ENCODE measurements at regions of chr11 and their contacts with region 1.

Region 1: DNA sequence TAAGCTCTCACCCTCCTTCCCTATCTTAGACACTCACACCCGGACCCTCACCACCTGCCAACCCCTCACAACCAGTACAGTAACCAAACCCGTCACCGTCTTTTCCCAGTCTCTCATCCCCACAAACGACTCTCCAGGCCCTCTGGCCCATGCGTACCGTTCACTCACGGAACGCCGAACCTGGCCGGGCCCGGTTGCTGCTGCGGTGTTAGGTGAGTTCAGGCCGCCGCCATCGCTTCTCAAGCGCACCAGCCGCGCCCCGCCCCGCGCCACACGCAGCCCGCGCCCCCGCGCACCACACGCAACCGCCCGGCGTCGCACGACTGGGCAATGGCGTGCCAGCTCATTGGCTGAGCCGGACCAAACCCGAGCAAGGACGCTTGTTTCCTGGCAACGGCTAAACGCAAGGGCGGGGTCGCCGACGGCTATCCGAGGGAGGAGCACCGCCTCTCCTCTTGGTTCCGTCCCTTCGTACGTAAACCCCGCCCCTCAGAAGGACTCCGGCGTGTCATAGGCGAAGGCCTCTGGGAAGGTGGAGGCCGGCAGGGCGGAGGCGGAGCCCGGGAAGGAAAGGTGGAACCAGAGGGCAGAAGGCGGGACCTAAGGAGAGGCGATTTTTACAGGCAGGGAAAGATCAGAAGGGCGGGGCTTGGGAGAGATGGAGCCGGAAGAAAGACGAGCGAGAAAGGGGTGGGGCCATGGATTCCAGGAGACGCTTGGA is at the start of gene FHIP1B:
- DNase-seq: peak; percentile 99 to 100 (median 100)
- H3K4me3 ChIP-seq: peak within 1 kb of the TSS; percentile 80 to 86
- H3K4me3 Mint-ChIP-seq: peak within 1 kb of the TSS; percentile 96 to 100 (median 98)
- H3K27ac ChIP-seq: peak within 1 kb of the TSS; percentile 75
- H3K27ac Mint-ChIP-seq: peak within 1 kb of the TSS; percentile 87 to 100 (median 99)
- H3K4me1 ChIP-seq: peaks cover 32% of the 10 kb centered on the region
- H3K4me1 Mint-ChIP-seq: peaks cover 27 to 51% (median 42%) of the 10 kb centered on the region in 4 donors
- H3K27me3 ChIP-seq: no peaks in the 10 kb centered on the region
- H3K27me3 Mint-ChIP-seq: peaks cover 0 to 2% of the 10 kb centered on the region in 2 donors
- total RNA-seq, gene FHIP1B: 48.7 to 50.8 TPM

Region 2: GRCh38 chr11:5684646-5685362 is 549.7 kb before region 1 on chr11 and contains the start of gene TRIM5:
- CTCF ChIA-PET with region 1: no interaction called
- POLR2A ChIA-PET with region 1: no interaction called
- intact Hi-C with region 1: loop called (anchors 10 kb)
- DNase-seq: peak; percentile 79 to 90 (median 81)
- H3K4me3 ChIP-seq: peak within 1 kb of the TSS; percentile 65 to 100
- H3K4me3 Mint-ChIP-seq: peak within 1 kb of the TSS; percentile 91 to 97 (median 95)
- H3K27ac ChIP-seq: peak within 1 kb of the TSS; percentile 83
- H3K27ac Mint-ChIP-seq: peak within 1 kb of the TSS; percentile 94 to 98 (median 97)
- H3K4me1 ChIP-seq: peaks cover 33% of the 10 kb centered on the region
- H3K4me1 Mint-ChIP-seq: peaks cover 40 to 69% (median 54%) of the 10 kb centered on the region in 4 donors
- H3K27me3 ChIP-seq: no peaks in the 10 kb centered on the region
- H3K27me3 Mint-ChIP-seq: no peaks in the 10 kb centered on the region
- total RNA-seq, gene TRIM5: 33.9 to 35.5 TPM

Region 3: GRCh38 chr11:6258571-6259081 is 24.1 kb after region 1 on chr11:
- CTCF ChIA-PET with region 1: no interaction called
- POLR2A ChIA-PET with region 1: interaction called, 8 read pairs
- intact Hi-C with region 1: loop called (anchors 2 kb)
- DNase-seq: no peak
- H3K4me3 ChIP-seq: peak overlapping the region in 1 of 2 donors; percentile 23
- H3K4me3 Mint-ChIP-seq: peak overlapping the region; percentile 73 to 86 (median 83)
- H3K27ac ChIP-seq: no peak overlapping the region
- H3K27ac Mint-ChIP-seq: no peak overlapping the region
- H3K4me1 ChIP-seq: peaks cover 11% of the 10 kb centered on the region
- H3K4me1 Mint-ChIP-seq: peaks cover 0 to 11% (median 5%) of the 10 kb centered on the region in 4 donors
- H3K27me3 ChIP-seq: peaks cover 21% of the 10 kb centered on the region
- H3K27me3 Mint-ChIP-seq: peaks cover 8 to 11% of the 10 kb centered on the region in 2 donors

Region 4: GRCh38 chr11:6481012-6481923 is 246.7 kb after region 1 on chr11 and contains the starts of genes ARFIP2 and TIMM10B:
- CTCF ChIA-PET with region 1: no interaction called
- POLR2A ChIA-PET with region 1: interaction called, 14 read pairs
- intact Hi-C with region 1: loop called (anchors 1 kb)
- DNase-seq: peak; percentile 93 to 98 (median 95)
- H3K4me3 ChIP-seq: peak within 1 kb of the TSS; percentile 83 to 97
- H3K4me3 Mint-ChIP-seq: peak within 1 kb of the TSS; percentile 93 to 98 (median 96)
- H3K27ac ChIP-seq: peak within 1 kb of the TSS; percentile 90
- H3K27ac Mint-ChIP-seq: peak within 1 kb of the TSS; percentile 95 to 99 (median 98)
- H3K4me1 ChIP-seq: peaks cover 46% of the 10 kb centered on the region
- H3K4me1 Mint-ChIP-seq: peaks cover 26 to 44% (median 36%) of the 10 kb centered on the region in 4 donors
- H3K27me3 ChIP-seq: no peaks in the 10 kb centered on the region
- H3K27me3 Mint-ChIP-seq: no peaks in the 10 kb centered on the region
- total RNA-seq, gene ARFIP2: 53.9 to 56.9 TPM
- total RNA-seq, gene TIMM10B: 54.7 to 60.3 TPM

Region 5: GRCh38 chr11:6737872-6738466 is 503.4 kb after region 1 on chr11:
- CTCF ChIA-PET with region 1: no interaction called
- POLR2A ChIA-PET with region 1: no interaction called
- intact Hi-C with region 1: loop called (anchors 10 kb)
- DNase-seq: peak; percentile 73 to 82 (median 75)
- H3K4me3 ChIP-seq: no peak overlapping the region
- H3K4me3 Mint-ChIP-seq: peak overlapping the region; percentile 23 to 77 (median 38)
- H3K27ac ChIP-seq: peak overlapping the region; percentile 38
- H3K27ac Mint-ChIP-seq: peak overlapping the region; percentile 60 to 89 (median 75)
- H3K4me1 ChIP-seq: peaks cover 88% of the 10 kb centered on the region
- H3K4me1 Mint-ChIP-seq: peaks cover 75 to 91% (median 83%) of the 10 kb centered on the region in 4 donors
- H3K27me3 ChIP-seq: no peaks in the 10 kb centered on the region
- H3K27me3 Mint-ChIP-seq: no peaks in the 10 kb centered on the region

Region 6: DNA sequence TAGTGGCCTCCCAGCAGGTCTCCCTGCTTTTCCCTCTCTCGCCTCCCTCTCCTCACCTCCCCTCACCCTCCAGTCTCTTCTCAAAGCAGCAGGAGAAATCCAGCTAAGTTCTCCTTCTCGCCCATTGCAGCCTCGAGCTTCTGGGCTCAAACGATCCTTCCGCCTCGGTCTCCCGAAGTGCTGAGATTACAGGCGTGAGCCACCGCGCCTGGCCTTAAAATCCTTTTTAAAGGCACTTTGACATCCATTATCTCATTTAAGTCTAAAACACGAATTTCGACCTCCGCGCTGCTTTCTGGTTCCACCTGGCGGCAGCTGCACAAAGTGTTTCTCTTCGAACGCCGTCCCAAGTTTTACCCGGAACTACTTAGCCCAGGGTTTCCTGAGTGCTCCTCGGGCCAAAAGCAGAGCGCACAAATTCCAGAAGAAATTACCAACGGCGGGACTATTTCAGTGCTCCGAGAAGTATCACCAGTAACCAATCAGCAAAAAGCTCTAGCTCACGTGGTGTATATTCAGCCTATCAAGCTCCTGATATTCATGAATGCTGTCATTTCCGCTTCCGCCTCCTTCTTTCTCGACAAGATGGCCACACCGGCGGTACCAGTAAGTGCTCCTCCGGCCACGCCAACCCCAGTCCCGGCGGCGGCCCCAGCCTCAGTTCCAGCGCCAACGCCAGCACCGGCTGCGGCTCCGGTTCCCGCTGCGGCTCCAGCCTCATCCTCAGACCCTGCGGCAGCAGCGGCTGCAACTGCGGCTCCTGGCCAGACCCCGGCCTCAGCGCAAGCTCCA is 1752.4 kb after region 1 on chr11 and contains the start of gene EIF3F:
- CTCF ChIA-PET with region 1: no interaction called
- POLR2A ChIA-PET with region 1: no interaction called
- intact Hi-C with region 1: loop called (anchors 10 kb)
- DNase-seq: peak; percentile 93 to 98 (median 96)
- H3K4me3 ChIP-seq: peak within 1 kb of the TSS; percentile 63 to 77
- H3K4me3 Mint-ChIP-seq: peak within 1 kb of the TSS; percentile 89 to 97 (median 95)
- H3K27ac ChIP-seq: peak within 1 kb of the TSS; percentile 77
- H3K27ac Mint-ChIP-seq: peak within 1 kb of the TSS; percentile 89 to 99 (median 98)
- H3K4me1 ChIP-seq: peaks cover 36% of the 10 kb centered on the region
- H3K4me1 Mint-ChIP-seq: peaks cover 29 to 59% (median 46%) of the 10 kb centered on the region in 4 donors
- H3K27me3 ChIP-seq: no peaks in the 10 kb centered on the region
- H3K27me3 Mint-ChIP-seq: no peaks in the 10 kb centered on the region
- total RNA-seq, gene EIF3F: 317 to 330 TPM

Measured in CD4-positive, alpha-beta memory T cell (primary cell).